Activated CD8-positive, alpha-beta T cell treated with anti-CD3 and anti-CD28 coated beads, Interleukin-2, amount 10 ng/mL, durations not matched to agents 7 days and 5 days (primary cell): ENCODE measurements at regions of chr2 and their contacts with region 1.

Region 1: DNA sequence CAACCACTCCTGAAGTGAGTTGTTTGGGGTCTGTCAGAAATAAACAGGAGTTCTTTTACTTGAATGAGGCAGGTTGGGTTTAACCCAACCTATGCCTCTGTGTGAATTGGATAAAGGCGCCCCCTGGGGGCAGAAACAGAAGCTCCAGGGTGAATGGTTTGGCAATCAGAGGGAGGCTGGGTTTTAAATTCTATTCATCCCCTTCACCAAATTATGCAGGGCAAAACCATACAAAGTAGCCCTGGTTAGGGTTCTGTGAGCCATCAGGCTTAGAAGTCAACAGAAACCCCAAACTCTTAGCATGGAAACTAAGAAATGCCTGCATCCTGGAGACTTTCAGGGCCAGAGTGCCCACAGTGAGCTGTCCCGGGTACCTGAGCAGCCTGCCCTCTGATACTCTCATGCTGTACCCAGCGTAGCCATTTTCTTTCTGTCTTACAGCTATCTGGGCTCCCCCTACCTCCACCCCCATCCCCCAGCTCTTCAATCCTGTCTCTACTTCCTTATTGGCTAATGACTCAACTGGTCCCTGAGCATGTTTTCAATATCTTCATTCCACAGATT is 241.5 kb downstream of the ICOS start:
- DNase-seq: peak; percentile 73
- ATAC-seq: peak; percentile 81
- H3K4me3 Mint-ChIP-seq: no peak overlapping the region
- H3K27ac Mint-ChIP-seq: no peak overlapping the region
- H3K4me1 Mint-ChIP-seq: no peaks in the 10 kb centered on the region
- H3K27me3 Mint-ChIP-seq: peaks cover 19% of the 10 kb centered on the region

Region 2: DNA sequence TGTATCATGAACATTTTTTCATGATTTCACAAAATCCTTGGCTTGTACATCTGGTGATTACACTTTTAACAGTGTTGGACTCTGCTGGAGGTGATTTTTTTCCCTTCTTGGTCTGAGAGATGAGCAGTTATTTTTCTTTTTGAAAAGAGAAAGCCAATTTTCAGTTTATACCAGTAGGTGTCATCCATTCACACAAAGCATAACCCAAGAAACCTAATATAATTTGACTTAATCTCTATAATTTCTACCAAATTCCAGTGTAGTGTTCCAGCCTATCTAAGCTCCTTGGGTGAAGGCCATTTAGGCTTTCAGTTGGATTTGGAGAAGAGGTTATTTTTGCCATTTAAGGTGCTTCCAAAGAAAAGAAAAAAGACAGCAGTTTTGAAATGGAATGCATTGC is 249.2 kb before region 1 on chr2:
- CTCF ChIA-PET with region 1: interaction called, 10 read pairs
- POLR2A ChIA-PET with region 1: no interaction called
- DNase-seq: no peak
- ATAC-seq: peak; percentile 26
- H3K4me3 Mint-ChIP-seq: no peak overlapping the region
- H3K27ac Mint-ChIP-seq: no peak overlapping the region
- H3K4me1 Mint-ChIP-seq: peaks cover 15% of the 10 kb centered on the region
- H3K27me3 Mint-ChIP-seq: peaks cover 6% of the 10 kb centered on the region

Region 3: GRCh38 chr2:204108330-204108751 is 69.7 kb before region 1 on chr2:
- CTCF ChIA-PET with region 1: interaction called, 69 read pairs
- POLR2A ChIA-PET with region 1: no interaction called
- DNase-seq: peak; percentile 69
- ATAC-seq: peak; percentile 52
- H3K4me3 Mint-ChIP-seq: peak overlapping the region; percentile 45
- H3K27ac Mint-ChIP-seq: peak overlapping the region; percentile 75
- H3K4me1 Mint-ChIP-seq: peaks cover 52% of the 10 kb centered on the region
- H3K27me3 Mint-ChIP-seq: peaks cover 17% of the 10 kb centered on the region

Region 4: DNA sequence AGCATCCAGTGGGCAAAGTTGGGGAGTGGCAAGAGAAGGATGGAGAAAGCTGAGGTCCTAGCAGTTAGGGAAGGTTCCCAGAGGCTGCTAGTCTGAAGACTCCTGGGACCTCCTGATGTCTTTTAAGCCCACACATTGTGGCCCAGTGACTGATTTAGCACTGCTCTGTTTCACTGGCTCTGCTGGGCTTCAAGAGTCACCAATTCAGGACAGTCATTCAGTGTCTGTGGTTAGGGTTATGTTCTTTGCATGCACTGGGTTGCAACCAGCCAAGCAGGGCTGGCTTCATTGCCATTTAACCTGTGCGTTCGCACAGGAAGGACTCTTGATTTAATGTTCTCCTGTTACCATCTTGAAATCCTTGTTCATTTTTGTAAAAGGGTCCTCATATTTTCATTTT is 42.3 kb before region 1 on chr2:
- CTCF ChIA-PET with region 1: interaction called, 12 read pairs
- POLR2A ChIA-PET with region 1: no interaction called
- DNase-seq: no peak
- ATAC-seq: no peak
- H3K4me3 Mint-ChIP-seq: no peak overlapping the region
- H3K27ac Mint-ChIP-seq: no peak overlapping the region
- H3K4me1 Mint-ChIP-seq: no peaks in the 10 kb centered on the region
- H3K27me3 Mint-ChIP-seq: peaks cover 7% of the 10 kb centered on the region

Region 5: GRCh38 chr2:204159526-204159925 is 18.5 kb before region 1 on chr2:
- CTCF ChIA-PET with region 1: interaction called, 13 read pairs
- POLR2A ChIA-PET with region 1: no interaction called
- DNase-seq: no peak
- ATAC-seq: no peak
- H3K4me3 Mint-ChIP-seq: no peak overlapping the region
- H3K27ac Mint-ChIP-seq: no peak overlapping the region
- H3K4me1 Mint-ChIP-seq: no peaks in the 10 kb centered on the region
- H3K27me3 Mint-ChIP-seq: peaks cover 7% of the 10 kb centered on the region

Region 6: GRCh38 chr2:204197336-204198005 is 19.4 kb after region 1 on chr2:
- CTCF ChIA-PET with region 1: interaction called, 10 read pairs
- POLR2A ChIA-PET with region 1: no interaction called
- DNase-seq: no peak
- ATAC-seq: no peak
- H3K4me3 Mint-ChIP-seq: no peak overlapping the region
- H3K27ac Mint-ChIP-seq: no peak overlapping the region
- H3K4me1 Mint-ChIP-seq: no peaks in the 10 kb centered on the region
- H3K27me3 Mint-ChIP-seq: peaks cover 25% of the 10 kb centered on the region

Region 7: DNA sequence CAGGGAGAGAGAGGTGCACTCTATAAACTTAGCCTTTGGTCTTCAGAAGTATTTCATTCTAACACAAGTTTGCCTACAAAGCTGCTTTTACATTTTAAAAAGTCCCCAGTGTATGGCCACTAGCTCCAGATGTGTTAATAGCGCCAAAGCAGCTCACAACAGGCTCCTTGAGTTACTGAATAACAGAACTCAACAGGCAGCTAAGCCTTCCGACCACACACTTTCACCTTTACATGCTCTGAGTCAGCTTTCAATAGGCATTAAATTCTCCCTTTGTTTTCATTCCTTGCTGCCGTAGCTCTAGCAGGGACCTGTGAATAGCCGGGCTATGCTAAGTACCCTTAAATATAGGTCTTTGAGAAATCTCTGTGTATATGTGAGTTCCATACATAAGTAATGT is 104.5 kb after region 1 on chr2:
- CTCF ChIA-PET with region 1: no interaction called
- POLR2A ChIA-PET with region 1: no interaction called
- DNase-seq: no peak
- ATAC-seq: no peak
- H3K4me3 Mint-ChIP-seq: no peak overlapping the region
- H3K27ac Mint-ChIP-seq: no peak overlapping the region
- H3K4me1 Mint-ChIP-seq: no peaks in the 10 kb centered on the region
- H3K27me3 Mint-ChIP-seq: peaks cover 30% of the 10 kb centered on the region